Posterior vena cava (tissue), 2 donors: ENCODE measurements at regions of chr11 and their contacts with region 1.

Region 1: GRCh38 chr11:112219476-112220232 is 6.6 kb upstream of the PTS start:
- DNase-seq: no peak

Region 2: GRCh38 chr11:110497231-110497978 is 1722.2 kb before region 1 on chr11:
- intact Hi-C with region 1: no loop called
- DNase-seq: no peak

Region 3: GRCh38 chr11:112280268-112281126 is 60.8 kb after region 1 on chr11:
- intact Hi-C with region 1: loop called (anchors 2 to 5 kb)
- DNase-seq: no peak

Region 4: GRCh38 chr11:113289431-113290187 is 1070.0 kb after region 1 on chr11:
- intact Hi-C with region 1: loop called in 1 of 2 experiments (anchors 10 kb)
- DNase-seq: no peak

Region 5: DNA sequence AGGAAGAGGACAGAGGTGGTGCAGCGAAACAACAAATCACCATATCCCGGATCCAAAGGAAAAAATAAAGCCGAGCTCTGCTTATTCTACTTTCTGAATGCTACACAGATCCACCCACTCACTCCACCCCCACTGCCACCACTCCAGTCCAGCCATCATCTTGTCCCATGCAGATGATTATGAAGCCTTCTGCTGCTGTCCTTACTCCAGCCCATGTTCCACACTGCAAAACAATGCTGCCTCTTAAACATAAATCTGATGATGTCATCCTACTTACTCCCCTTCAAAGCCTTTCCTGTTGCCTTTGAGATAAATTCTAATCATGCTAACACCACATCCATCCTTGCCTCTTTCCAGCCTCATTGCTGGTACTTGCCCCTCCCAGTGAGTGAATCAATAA is 1262.0 kb after region 1 on chr11:
- intact Hi-C with region 1: loop called in 1 of 2 experiments (anchors 5 kb)
- DNase-seq: no peak